ENCODE measurements at regions of chr5 and their contacts with region 1.

Region 1: GRCh38 chr5:142572006-142572405 is 113.9 kb downstream of the FGF1 start:
- DNase-seq: no peak
- H3K4me3 ChIP-seq: no peak overlapping the region
- H3K27ac ChIP-seq: no peak overlapping the region
- H3K4me1 ChIP-seq: no peaks in the 10 kb centered on the region
- H3K27me3 ChIP-seq: no peaks in the 10 kb centered on the region
- CTCF ChIP-seq: no peak

Region 2: GRCh38 chr5:142095651-142096330 is 476.2 kb before region 1 on chr5:
- CTCF ChIA-PET with region 1: no interaction called
- POLR2A ChIA-PET with region 1: interaction called, 40 read pairs
- intact Hi-C with region 1: no loop called
- DNase-seq: peak in 1 of 2 experiments; percentile 11
- H3K4me3 ChIP-seq: no peak overlapping the region
- H3K27ac ChIP-seq: no peak overlapping the region
- H3K4me1 ChIP-seq: peaks cover 9% of the 10 kb centered on the region
- H3K27me3 ChIP-seq: no peaks in the 10 kb centered on the region
- CTCF ChIP-seq: no peak

Region 3: GRCh38 chr5:143008809-143009521 is 437.0 kb after region 1 on chr5:
- CTCF ChIA-PET with region 1: no interaction called
- POLR2A ChIA-PET with region 1: no interaction called
- intact Hi-C with region 1: no loop called
- DNase-seq: peak; percentile 16 to 83
- H3K4me3 ChIP-seq: no peak overlapping the region
- H3K27ac ChIP-seq: peak overlapping the region; percentile 63
- H3K4me1 ChIP-seq: peaks cover 9% of the 10 kb centered on the region
- H3K27me3 ChIP-seq: no peaks in the 10 kb centered on the region
- CTCF ChIP-seq: no peak